Vagina (tissue), 2 donors: ENCODE measurements at regions of chr11 and their contacts with region 1.

Region 1: DNA sequence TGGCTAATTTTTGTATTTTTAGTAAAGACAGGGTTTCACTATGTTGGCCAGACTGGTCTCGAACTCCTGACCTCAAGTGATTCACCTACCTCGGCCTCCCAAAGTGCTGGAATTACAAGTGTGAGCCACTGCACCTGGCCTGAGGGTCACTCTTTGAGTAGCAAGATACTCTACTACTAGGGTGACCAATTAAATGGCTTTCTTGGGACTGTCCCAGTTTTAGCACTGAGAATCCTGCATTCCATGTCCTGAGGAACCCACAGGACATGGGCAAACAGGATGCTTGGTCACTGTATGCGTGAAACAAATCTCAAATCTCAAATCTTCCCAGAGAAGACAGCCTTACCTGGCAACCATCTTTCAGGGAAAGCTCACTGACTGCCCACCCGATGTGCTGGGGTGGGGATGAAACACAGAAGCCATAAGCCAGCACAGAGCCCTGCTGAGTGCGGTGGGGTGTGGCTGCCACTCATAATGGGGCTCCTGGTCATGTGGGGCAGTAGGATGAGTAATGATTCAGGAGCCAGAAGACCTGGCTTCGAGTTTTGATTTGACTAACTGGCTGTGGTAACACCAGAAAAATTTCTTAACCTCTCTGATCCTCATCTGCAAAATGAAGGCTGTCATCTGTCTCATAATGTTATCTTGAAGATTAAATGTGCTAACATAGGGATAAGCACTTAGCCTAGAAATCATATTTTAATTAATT is 11.5 kb downstream of the CLMP start:
- DNase-seq: no peak
- H3K4me3 ChIP-seq: no peak overlapping the region
- H3K27ac ChIP-seq: no peak overlapping the region
- H3K4me1 ChIP-seq: peaks cover 7% of the 10 kb centered on the region
- H3K27me3 ChIP-seq: no peaks in the 10 kb centered on the region
- CTCF ChIP-seq: no peak
- POLR2A ChIP-seq: no peak

Region 2: DNA sequence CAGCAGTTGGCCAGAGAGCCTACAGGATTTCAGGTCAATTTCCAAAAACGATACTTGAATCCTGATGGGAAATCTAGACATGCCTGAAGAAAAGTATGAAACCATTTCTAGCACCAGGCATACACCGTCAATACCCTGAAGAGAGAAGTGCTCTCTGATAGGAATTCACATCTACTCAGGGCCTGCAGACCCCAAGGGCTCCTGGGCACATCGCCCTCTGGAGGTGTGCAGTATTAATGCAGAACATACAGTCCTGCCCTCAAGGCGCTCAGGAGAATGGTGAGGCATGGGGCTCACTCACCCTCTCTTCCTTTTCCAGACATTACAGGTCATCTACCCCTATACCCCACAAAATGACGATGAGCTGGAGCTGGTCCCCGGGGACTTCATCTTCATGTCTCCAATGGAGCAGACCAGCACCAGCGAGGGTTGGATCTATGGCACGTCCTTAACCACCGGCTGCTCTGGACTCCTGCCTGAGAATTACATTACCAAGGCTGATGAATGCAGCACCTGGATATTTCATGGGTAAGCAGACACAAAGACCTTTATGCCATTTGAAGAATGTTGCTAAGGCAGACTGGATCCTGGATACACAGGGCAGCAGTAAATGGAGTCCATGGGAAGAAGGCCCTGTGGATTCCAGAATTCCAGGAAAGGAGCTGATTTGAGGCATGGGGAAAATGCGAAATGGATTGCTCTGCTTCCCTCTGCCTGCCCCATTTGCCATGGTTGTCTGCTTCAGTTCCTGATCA is 394.6 kb before region 1 on chr11:
- intact Hi-C with region 1: loop called (anchors 5 kb)
- DNase-seq: no peak
- H3K4me3 ChIP-seq: no peak overlapping the region
- H3K27ac ChIP-seq: no peak overlapping the region
- H3K4me1 ChIP-seq: peaks cover 13% of the 10 kb centered on the region
- H3K27me3 ChIP-seq: no peaks in the 10 kb centered on the region
- CTCF ChIP-seq: no peak
- POLR2A ChIP-seq: no peak